Natural killer cell (primary cell): ENCODE measurements at regions of chr1 and their contacts with region 1.

Region 1: DNA sequence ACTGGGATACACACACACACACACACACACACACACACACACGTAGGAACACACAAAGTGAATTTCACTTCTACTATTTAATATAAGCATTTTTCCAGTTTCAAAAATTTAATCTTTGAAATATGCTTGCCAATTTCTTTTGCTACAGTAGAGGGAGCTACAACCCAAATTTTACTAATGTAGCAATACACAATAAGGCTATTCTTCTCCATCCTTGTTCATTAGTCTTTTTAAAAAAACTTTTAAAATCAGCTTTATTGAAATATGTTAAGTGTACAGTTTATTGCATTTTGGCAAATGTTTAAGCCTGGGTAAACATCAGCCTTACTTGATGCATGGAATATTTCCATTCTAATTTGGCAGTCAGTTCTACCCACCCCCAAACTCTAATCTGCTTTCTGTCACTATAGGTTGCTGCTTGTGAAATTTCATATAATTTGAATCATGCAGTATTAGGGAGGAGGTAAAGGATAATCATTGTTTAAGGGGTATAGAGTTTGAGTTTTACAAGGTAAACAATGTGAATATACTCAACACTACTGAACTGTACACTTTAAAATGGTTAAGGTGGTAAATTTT is 93.0 kb upstream of the TENT5C start:
- DNase-seq: peak in 1 of 2 donors; percentile 59
- ATAC-seq: peak in 1 of 3 donors; percentile 60
- H3K4me3 ChIP-seq: no peak overlapping the region
- H3K4me3 Mint-ChIP-seq: no peak overlapping the region
- H3K27ac ChIP-seq: no peak overlapping the region
- H3K27ac Mint-ChIP-seq: no peak overlapping the region
- H3K4me1 ChIP-seq: no peaks in the 10 kb centered on the region
- H3K4me1 Mint-ChIP-seq: no peaks in the 10 kb centered on the region
- H3K27me3 ChIP-seq: no peaks in the 10 kb centered on the region
- H3K27me3 Mint-ChIP-seq: no peaks in the 10 kb centered on the region
- CTCF ChIP-seq: peak; percentile 54

Region 2: DNA sequence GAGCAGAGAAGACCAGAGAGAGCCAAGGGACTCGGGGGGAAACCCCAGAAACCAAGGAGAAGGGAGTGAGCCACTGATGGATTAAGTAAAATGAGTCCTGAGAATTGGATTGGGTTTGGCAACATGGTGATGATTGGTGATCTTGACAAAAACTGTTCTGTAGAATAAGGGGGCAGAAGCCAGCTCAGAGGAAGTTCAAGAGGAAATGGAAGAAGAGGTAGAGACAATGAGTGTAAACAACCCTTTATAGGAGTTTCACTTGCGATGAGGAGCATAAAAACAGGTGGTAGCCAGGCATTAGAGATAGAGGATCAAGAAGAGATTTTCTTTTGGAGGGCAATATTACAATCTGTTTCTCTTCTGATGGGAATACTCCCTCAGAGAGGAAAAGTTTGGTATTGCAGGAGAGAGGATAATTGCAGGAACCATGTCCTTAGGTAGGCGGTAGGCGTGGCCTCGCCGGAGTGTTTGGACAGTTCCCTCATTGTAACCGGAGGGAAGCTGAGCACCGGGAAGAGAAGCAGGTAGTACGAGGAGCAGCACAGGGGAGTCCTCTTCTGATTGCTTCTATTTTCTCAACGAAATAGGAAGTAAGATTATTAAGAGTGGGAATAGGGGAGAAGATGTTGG is 24.6 kb after region 1 on chr1:
- intact Hi-C with region 1: no loop called
- DNase-seq: peak in 1 of 2 donors; percentile 10
- ATAC-seq: no peak
- H3K4me3 ChIP-seq: no peak overlapping the region
- H3K4me3 Mint-ChIP-seq: no peak overlapping the region
- H3K27ac ChIP-seq: no peak overlapping the region
- H3K27ac Mint-ChIP-seq: no peak overlapping the region
- H3K4me1 ChIP-seq: peaks cover 4% of the 10 kb centered on the region
- H3K4me1 Mint-ChIP-seq: peaks cover 0 to 6% of the 10 kb centered on the region in 2 donors
- H3K27me3 ChIP-seq: no peaks in the 10 kb centered on the region
- H3K27me3 Mint-ChIP-seq: peaks cover 0 to 4% of the 10 kb centered on the region in 2 donors
- CTCF ChIP-seq: no peak

Region 3: DNA sequence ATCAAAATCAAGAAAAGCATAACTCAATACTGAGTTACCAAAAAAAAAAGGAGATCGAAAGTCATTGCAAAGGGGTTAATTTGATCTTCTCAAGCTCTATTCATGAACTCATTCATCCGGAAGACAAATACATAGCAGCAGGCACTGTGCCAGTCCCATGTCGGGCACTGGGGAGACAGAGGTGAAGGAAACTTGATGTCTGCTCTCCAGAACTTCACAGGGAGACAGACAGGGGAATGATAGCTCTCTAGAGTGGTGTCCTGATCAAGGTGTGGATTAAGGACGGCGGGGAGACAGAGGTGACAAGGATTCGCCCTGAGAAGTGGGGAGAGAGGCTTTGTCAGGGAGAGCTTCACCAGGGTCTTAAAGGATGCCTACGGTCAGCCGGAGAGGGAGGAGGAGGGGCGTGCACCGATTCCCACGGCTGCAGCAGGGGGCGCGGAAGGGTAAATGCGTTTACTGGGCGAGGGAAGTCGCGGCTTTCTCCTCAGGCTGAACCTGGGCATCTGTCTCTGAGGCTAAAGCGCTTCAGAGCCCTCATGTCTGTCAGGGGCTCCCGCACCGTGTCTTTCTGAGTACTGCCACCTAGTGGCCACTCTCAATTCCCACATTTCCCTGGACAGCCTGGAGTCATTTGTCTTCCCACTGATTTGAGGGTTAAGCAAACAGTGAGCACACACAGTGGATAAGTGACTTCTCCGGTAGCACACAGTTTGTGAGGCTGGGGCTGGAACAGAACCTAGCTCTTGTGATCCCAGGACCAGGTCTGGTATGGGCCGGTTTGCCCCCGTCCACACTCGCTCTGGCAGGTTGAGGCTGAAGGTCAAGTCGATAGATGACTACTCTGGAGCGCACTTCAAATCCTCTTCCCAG is 245.8 kb after region 1 on chr1:
- intact Hi-C with region 1: loop called (anchors 1 kb)
- DNase-seq: peak; percentile 51 to 85
- ATAC-seq: peak; percentile 87 to 94 (median 94)
- H3K4me3 ChIP-seq: peak overlapping the region; percentile 25
- H3K4me3 Mint-ChIP-seq: peak overlapping the region; percentile 84
- H3K27ac ChIP-seq: no peak overlapping the region
- H3K27ac Mint-ChIP-seq: peak overlapping the region in 1 of 2 donors; percentile 16
- H3K4me1 ChIP-seq: peaks cover 12% of the 10 kb centered on the region
- H3K4me1 Mint-ChIP-seq: peaks cover 11% of the 10 kb centered on the region in 2 donors
- H3K27me3 ChIP-seq: peaks cover 6% of the 10 kb centered on the region
- H3K27me3 Mint-ChIP-seq: peaks cover 21 to 47% of the 10 kb centered on the region in 2 donors
- CTCF ChIP-seq: peak; percentile 93

Region 4: DNA sequence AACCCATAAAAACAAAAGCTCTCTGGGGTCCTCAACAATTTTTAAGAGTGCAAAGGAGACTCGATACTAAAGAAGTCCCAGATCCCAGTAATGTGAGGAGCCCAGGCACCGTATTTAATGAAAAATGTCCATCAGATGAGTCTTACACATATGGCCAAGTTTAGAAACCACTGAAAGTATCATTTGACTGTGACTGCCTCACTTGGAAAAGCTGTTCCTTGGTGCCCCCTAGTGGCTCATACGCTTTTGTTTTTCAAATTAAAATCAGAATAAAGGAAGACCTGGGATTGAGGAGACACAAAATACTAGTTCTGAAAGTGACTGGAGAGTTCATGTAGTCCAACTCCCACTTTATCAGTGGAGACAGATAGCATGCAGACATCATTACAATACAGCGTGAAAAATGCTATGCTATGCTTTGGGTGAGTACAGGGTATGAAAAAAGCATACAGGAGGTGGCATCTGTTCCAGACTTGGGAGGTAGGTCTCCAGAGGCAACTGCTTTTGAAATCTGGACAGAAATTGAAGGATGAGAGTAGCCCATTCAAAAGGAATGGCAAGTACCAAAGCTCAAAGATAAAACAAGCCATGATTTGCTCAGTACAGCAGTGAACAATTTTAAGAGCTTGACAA is 382.8 kb after region 1 on chr1:
- intact Hi-C with region 1: loop called (anchors 1 kb)
- DNase-seq: peak; percentile 19 to 74
- ATAC-seq: peak; percentile 53 to 61 (median 60)
- H3K4me3 ChIP-seq: no peak overlapping the region
- H3K4me3 Mint-ChIP-seq: no peak overlapping the region
- H3K27ac ChIP-seq: no peak overlapping the region
- H3K27ac Mint-ChIP-seq: peak overlapping the region; percentile 33 to 52
- H3K4me1 ChIP-seq: no peaks in the 10 kb centered on the region
- H3K4me1 Mint-ChIP-seq: peaks cover 0 to 5% of the 10 kb centered on the region in 2 donors
- H3K27me3 ChIP-seq: no peaks in the 10 kb centered on the region
- H3K27me3 Mint-ChIP-seq: no peaks in the 10 kb centered on the region
- CTCF ChIP-seq: peak; percentile 85